ENCODE measurements at regions of chr5 and their contacts with region 1.

Region 1: GRCh38 chr5:114449860-114450421 is 88.1 kb downstream of the KCNN2 start:
- DNase-seq: peak; percentile 32 to 71 (median 71)
- H3K4me3 ChIP-seq: no peak overlapping the region
- H3K27ac ChIP-seq: no peak overlapping the region
- H3K4me1 ChIP-seq: no peaks in the 10 kb centered on the region
- H3K27me3 ChIP-seq: peaks cover 0 to 14% (median 0%) of the 10 kb centered on the region in 5 experiments

Region 2: DNA sequence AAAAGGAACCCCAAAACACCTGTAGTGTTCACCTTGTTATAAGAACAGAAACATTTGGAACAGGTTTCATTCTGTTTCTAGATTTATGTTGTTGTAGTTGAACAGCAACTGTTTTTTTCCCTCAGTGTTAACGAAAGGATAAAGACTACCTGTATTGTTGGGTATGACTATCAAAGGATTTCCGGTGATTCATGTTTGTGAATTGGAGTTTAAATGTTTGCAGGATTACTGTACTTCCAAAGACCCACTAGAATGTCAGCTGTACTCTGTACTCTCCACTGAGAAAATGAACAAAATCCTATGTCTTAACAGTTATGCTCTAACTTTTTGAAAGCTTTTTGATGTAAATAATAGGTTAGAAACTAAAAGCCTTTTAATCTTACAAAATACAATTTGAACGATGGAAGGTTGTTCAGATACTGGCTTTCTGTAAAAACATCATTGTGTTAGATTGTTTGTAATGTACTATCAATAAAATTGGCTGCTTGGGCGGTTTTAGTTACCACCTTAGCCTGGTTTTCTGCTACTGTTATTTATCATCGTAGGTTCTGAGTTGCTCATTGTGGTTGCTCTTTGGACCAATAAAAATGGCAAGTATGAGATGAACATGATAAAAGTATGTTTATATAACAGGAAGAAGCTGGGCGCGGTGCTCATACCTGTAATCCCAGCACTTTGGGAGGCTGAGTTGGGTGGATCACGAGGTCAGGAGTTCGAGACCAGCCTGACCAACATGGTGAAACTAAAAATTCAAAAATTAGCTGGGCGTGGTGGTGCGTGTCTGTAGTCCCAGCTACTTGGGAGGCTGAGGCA is 1429.3 kb before region 1 on chr5:
- CTCF ChIA-PET with region 1: no interaction called
- POLR2A ChIA-PET with region 1: no interaction called
- DNase-seq: no peak
- H3K4me3 ChIP-seq: no peak overlapping the region
- H3K27ac ChIP-seq: no peak overlapping the region
- H3K4me1 ChIP-seq: peaks cover 3 to 18% (median 11%) of the 10 kb centered on the region in 4 experiments
- H3K27me3 ChIP-seq: no peaks in the 10 kb centered on the region

Region 3: GRCh38 chr5:113612060-113612496 is 837.9 kb before region 1 on chr5:
- CTCF ChIA-PET with region 1: interaction called, 57 read pairs
- POLR2A ChIA-PET with region 1: no interaction called
- DNase-seq: peak; percentile 22 to 54 (median 53)
- H3K4me3 ChIP-seq: no peak overlapping the region
- H3K27ac ChIP-seq: no peak overlapping the region
- H3K4me1 ChIP-seq: peaks cover 0 to 4% (median 0%) of the 10 kb centered on the region in 4 experiments
- H3K27me3 ChIP-seq: peaks cover 0 to 37% (median 16%) of the 10 kb centered on the region in 5 experiments

Region 4: GRCh38 chr5:114727358-114727757 is 277.4 kb after region 1 on chr5:
- CTCF ChIA-PET with region 1: no interaction called
- POLR2A ChIA-PET with region 1: no interaction called
- DNase-seq: no peak
- H3K4me3 ChIP-seq: no peak overlapping the region
- H3K27ac ChIP-seq: no peak overlapping the region
- H3K4me1 ChIP-seq: no peaks in the 10 kb centered on the region
- H3K27me3 ChIP-seq: no peaks in the 10 kb centered on the region

Measured in common myeloid progenitor, CD34-positive (primary cell).